Activated CD4-positive, alpha-beta T cell treated with anti-CD3 and anti-CD28 coated beads for 36 hours (primary cell): ENCODE measurements at regions of chr15 and their contacts with region 1.

Region 1: DNA sequence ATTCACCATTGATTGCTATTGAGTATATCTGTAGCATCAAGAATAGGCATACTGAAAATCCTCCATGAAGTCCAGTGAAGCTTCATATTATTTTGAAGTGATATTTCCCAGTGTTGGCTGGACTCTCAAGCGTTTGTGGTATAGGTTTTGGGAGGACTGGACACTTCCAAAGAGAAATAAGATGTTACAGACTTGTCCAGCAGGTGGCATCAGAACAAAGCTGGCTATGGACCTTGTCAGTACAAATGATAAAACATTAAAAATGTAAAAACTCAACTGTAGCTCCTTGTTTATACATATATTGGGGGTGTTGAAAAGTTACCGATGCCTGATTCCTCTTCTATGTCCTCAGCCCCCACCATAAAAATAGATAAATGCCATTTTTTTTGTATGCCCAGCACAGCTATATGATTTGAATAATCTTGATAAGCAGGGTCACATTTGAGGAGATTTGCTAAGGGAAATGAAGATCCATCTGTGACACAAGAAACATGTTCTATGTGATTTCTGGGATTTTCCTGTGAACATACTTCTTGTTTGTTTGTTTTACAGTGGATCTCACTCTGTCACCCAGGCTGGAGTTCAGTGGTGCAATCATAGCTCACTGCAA is 54.5 kb upstream of the GOLGA6B start:
- DNase-seq: peak; percentile 48
- ATAC-seq: peak; percentile 44
- H3K4me3 Mint-ChIP-seq: no peak overlapping the region
- H3K27ac Mint-ChIP-seq: no peak overlapping the region
- H3K4me1 Mint-ChIP-seq: no peaks in the 10 kb centered on the region
- H3K27me3 Mint-ChIP-seq: no peaks in the 10 kb centered on the region

Region 2: GRCh38 chr15:72562878-72563277 is 37.1 kb before region 1 on chr15:
- CTCF ChIA-PET with region 1: interaction called, 6 read pairs
- POLR2A ChIA-PET with region 1: interaction called, 10 read pairs
- intact Hi-C with region 1: no loop called
- DNase-seq: no peak
- ATAC-seq: no peak
- H3K4me3 Mint-ChIP-seq: no peak overlapping the region
- H3K27ac Mint-ChIP-seq: peak overlapping the region; percentile 31
- H3K4me1 Mint-ChIP-seq: no peaks in the 10 kb centered on the region
- H3K27me3 Mint-ChIP-seq: no peaks in the 10 kb centered on the region

Region 3: GRCh38 chr15:72585476-72586082 is 14.4 kb before region 1 on chr15:
- CTCF ChIA-PET with region 1: interaction called, 11 read pairs
- POLR2A ChIA-PET with region 1: no interaction called
- intact Hi-C with region 1: no loop called
- DNase-seq: no peak
- ATAC-seq: no peak
- H3K4me3 Mint-ChIP-seq: no peak overlapping the region
- H3K27ac Mint-ChIP-seq: no peak overlapping the region
- H3K4me1 Mint-ChIP-seq: no peaks in the 10 kb centered on the region
- H3K27me3 Mint-ChIP-seq: no peaks in the 10 kb centered on the region

Region 4: DNA sequence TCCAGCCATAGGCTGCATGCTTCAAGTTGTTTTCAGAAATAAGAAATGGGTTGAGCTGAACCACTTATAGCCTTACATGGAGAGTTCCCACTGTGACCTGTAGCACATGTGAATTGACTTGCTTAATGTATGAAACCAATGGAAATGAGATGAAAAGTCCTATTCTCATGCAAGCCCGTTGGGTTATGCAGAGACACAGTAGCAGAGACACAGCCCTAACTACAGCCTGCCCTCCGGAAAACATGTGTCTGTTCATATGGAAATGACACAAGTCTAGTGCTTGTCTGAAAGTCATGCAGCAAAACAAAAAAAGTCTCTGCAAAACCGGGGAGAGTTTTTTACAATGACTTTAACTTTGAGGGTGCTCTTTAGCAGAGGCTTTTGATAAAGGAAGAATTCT is 71.6 kb after region 1 on chr15:
- CTCF ChIA-PET with region 1: interaction called, 22 read pairs
- POLR2A ChIA-PET with region 1: no interaction called
- intact Hi-C with region 1: loop called (anchors 1 to 5 kb)
- DNase-seq: no peak
- ATAC-seq: no peak
- H3K4me3 Mint-ChIP-seq: no peak overlapping the region
- H3K27ac Mint-ChIP-seq: no peak overlapping the region
- H3K4me1 Mint-ChIP-seq: peaks cover 6% of the 10 kb centered on the region
- H3K27me3 Mint-ChIP-seq: peaks cover 3% of the 10 kb centered on the region

Region 5: DNA sequence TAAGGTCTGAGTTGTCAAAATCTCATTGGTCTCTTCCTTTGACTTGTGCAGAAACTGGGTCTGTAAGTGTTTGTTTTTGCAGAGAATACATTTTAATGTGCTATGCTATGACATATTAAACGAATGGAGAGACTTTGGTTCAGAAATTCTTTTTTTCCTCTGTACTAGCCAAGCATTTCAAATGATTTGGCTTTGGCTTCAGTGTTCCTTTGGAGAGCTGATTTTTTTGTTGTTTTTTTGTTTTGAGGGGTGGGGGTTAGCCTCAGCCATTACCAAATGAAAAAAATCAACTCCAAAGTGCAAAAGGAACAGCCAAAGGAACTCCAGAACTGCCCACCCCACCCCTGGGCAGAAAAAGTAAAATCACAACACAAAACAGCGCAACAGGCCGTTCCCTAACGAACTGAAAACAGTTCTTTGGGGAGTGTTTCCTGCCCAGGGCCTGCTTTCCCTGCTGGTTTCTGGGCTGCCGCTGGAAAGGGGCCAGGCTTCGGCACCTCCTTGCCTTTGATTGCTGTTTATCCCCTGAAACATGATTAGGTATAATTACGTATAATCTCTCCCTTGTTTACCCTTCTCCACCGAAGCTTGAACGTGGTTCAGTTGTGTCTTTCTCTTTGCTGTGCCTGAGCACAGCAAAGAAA is 394.7 kb after region 1 on chr15:
- CTCF ChIA-PET with region 1: no interaction called
- POLR2A ChIA-PET with region 1: no interaction called
- intact Hi-C with region 1: no loop called
- DNase-seq: no peak
- ATAC-seq: no peak
- H3K4me3 Mint-ChIP-seq: no peak overlapping the region
- H3K27ac Mint-ChIP-seq: no peak overlapping the region
- H3K4me1 Mint-ChIP-seq: no peaks in the 10 kb centered on the region
- H3K27me3 Mint-ChIP-seq: peaks cover 13% of the 10 kb centered on the region

Region 6: DNA sequence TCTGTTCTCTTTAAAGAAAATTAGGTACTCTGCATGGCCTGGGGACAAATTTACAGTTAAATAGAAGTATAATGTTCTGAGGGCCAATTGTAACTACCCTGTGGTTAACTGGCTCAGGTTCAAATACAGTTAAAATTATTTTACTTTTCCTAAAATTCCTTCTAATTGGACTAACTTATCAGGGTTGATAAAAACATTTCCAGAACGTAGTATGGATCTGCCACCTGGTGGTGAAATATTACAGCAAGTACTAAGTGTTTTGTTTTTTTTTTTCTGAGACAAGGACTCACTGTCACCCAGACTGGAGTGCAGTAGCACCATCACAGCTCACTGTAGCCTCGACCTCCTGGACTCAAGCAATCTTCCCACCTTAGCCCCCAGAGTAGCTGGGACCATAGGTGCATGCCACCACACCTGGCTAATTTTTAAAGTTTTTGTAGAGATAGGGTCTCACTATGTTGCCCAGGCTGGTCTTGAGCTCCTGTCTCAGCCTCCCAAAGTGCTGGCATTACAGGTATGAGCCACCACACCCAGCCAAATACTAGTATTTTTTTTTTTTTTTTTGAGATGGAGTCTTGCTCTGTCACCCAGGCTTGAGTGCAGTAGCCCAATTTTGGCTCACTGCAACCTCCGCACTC is 481.5 kb after region 1 on chr15:
- CTCF ChIA-PET with region 1: interaction called, 3 read pairs
- POLR2A ChIA-PET with region 1: no interaction called
- intact Hi-C with region 1: loop called in 1 of 2 experiments (anchors 5 kb)
- DNase-seq: peak; percentile 8
- ATAC-seq: no peak
- H3K4me3 Mint-ChIP-seq: no peak overlapping the region
- H3K27ac Mint-ChIP-seq: no peak overlapping the region
- H3K4me1 Mint-ChIP-seq: no peaks in the 10 kb centered on the region
- H3K27me3 Mint-ChIP-seq: no peaks in the 10 kb centered on the region